A549 (cell line): ENCODE measurements at regions of chr14 and their contacts with region 1.

Region 1: DNA sequence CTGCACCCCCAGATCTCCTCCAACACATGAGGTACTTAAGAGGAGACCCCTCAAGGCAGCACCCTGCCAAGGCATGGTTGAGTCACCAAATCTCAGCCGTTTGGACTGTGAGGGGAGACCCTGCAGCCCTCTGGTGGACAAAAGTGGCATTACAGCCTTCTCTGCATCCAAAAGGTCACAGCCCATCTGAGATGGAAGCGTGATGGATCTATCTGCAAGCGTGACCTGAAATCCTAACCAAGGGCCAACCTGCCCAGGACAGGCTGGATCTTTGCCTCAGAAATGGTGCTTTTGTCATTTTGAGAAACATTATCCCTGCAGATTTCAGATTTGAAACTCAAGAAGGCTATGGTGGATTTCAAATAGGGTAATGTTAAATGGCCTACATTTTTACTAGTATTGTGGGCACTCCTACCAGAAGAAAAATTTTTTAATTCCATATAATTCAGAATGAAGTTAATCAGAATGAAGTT is 23.7 kb upstream of the DHRS4 start:
- DNase-seq: peak; percentile 68 to 73
- ATAC-seq: peak; percentile 87 to 99
- H3K4me3 ChIP-seq: no peak overlapping the region
- H3K27ac ChIP-seq: no peak overlapping the region
- H3K4me1 ChIP-seq: no peaks in the 10 kb centered on the region
- CTCF ChIP-seq: peak; percentile 66
- EP300 ChIP-seq: no peak
- POLR2A ChIP-seq: no peak
- RAD21 ChIP-seq: peak; percentile 63 to 72

Region 2: GRCh38 chr14:23727566-23728335 is 202.1 kb before region 1 on chr14:
- CTCF ChIA-PET with region 1: interaction called, 16 read pairs
- POLR2A ChIA-PET with region 1: no interaction called
- DNase-seq: peak; percentile 63 to 66
- ATAC-seq: peak; percentile 84 to 94
- H3K4me3 ChIP-seq: no peak overlapping the region
- H3K27ac ChIP-seq: no peak overlapping the region
- H3K4me1 ChIP-seq: no peaks in the 10 kb centered on the region
- CTCF ChIP-seq: peak; percentile 71
- EP300 ChIP-seq: no peak
- POLR2A ChIP-seq: no peak
- RAD21 ChIP-seq: peak; percentile 75 to 86

Region 3: GRCh38 chr14:23895480-23895879 is 34.4 kb before region 1 on chr14:
- CTCF ChIA-PET with region 1: no interaction called
- POLR2A ChIA-PET with region 1: no interaction called
- DNase-seq: no peak
- ATAC-seq: peak in 1 of 2 experiments; percentile 36; a peak in 2 of 6 replicates
- H3K4me3 ChIP-seq: no peak overlapping the region
- H3K27ac ChIP-seq: no peak overlapping the region
- H3K4me1 ChIP-seq: no peaks in the 10 kb centered on the region
- CTCF ChIP-seq: 0 out of 3 replicates have a peak, but pooled peaks have one; percentile 12
- EP300 ChIP-seq: no peak
- POLR2A ChIP-seq: no peak
- RAD21 ChIP-seq: peak in 1 of 2 experiments; percentile 19; a peak in 2 of 5 replicates

Region 4: GRCh38 chr14:24013654-24014514 is 84.0 kb after region 1 on chr14:
- CTCF ChIA-PET with region 1: no interaction called
- POLR2A ChIA-PET with region 1: no interaction called
- DNase-seq: peak; percentile 58 to 77
- ATAC-seq: peak; percentile 85 to 87
- H3K4me3 ChIP-seq: no peak overlapping the region
- H3K27ac ChIP-seq: no peak overlapping the region
- H3K4me1 ChIP-seq: peaks cover 8% of the 10 kb centered on the region; the same call in 2 of the 3 replicates
- CTCF ChIP-seq: peak; percentile 93
- EP300 ChIP-seq: no peak
- POLR2A ChIP-seq: no peak
- RAD21 ChIP-seq: peak; percentile 95 to 98